ENCODE measurements at regions of chr12 and their contacts with region 1.

Region 1: GRCh38 chr12:53321074-53321814 is at the start of gene AAAS:
- DNase-seq: peak; percentile 95 to 97 (median 96)
- H3K4me3 ChIP-seq: peak within 1 kb of the TSS; percentile 87 to 94
- H3K4me3 Mint-ChIP-seq: peak within 1 kb of the TSS; percentile 94 to 100 (median 97)
- H3K27ac ChIP-seq: peak within 1 kb of the TSS; percentile 74
- H3K27ac Mint-ChIP-seq: peak within 1 kb of the TSS; percentile 90 to 100 (median 97)
- H3K4me1 ChIP-seq: peaks cover 44% of the 10 kb centered on the region
- H3K4me1 Mint-ChIP-seq: peaks cover 24 to 52% (median 38%) of the 10 kb centered on the region in 4 donors
- H3K27me3 ChIP-seq: no peaks in the 10 kb centered on the region
- H3K27me3 Mint-ChIP-seq: peaks cover 0 to 2% of the 10 kb centered on the region in 2 donors
- total RNA-seq, gene AAAS: 63.6 to 66.5 TPM

Region 2: DNA sequence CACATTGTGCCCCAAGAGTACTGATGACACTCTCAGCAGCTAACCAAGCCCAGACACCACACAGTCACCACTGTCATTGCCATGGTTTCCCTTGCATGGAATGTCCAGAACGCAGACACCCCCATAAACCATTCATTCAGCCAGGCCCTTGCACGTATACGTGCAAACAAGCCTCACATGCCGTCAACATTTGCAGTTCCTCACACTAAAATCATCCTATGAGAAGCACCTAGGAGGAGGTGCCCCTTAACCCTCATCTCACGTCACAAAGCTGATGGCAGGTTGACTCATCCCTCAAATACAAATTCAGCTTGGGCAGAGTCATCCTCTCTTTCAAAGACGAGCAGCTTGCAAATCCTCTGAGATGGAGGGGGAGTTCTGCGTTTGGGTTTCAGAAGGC is 600.8 kb before region 1 on chr12:
- CTCF ChIA-PET with region 1: no interaction called
- POLR2A ChIA-PET with region 1: no interaction called
- intact Hi-C with region 1: no loop called
- DNase-seq: no peak
- H3K4me3 ChIP-seq: no peak overlapping the region
- H3K4me3 Mint-ChIP-seq: no peak overlapping the region
- H3K27ac ChIP-seq: no peak overlapping the region
- H3K27ac Mint-ChIP-seq: peak overlapping the region in 1 of 7 donors; percentile 20
- H3K4me1 ChIP-seq: no peaks in the 10 kb centered on the region
- H3K4me1 Mint-ChIP-seq: no peaks in the 10 kb centered on the region
- H3K27me3 ChIP-seq: peaks cover 7% of the 10 kb centered on the region
- H3K27me3 Mint-ChIP-seq: peaks cover 11 to 16% of the 10 kb centered on the region in 2 donors

Region 3: DNA sequence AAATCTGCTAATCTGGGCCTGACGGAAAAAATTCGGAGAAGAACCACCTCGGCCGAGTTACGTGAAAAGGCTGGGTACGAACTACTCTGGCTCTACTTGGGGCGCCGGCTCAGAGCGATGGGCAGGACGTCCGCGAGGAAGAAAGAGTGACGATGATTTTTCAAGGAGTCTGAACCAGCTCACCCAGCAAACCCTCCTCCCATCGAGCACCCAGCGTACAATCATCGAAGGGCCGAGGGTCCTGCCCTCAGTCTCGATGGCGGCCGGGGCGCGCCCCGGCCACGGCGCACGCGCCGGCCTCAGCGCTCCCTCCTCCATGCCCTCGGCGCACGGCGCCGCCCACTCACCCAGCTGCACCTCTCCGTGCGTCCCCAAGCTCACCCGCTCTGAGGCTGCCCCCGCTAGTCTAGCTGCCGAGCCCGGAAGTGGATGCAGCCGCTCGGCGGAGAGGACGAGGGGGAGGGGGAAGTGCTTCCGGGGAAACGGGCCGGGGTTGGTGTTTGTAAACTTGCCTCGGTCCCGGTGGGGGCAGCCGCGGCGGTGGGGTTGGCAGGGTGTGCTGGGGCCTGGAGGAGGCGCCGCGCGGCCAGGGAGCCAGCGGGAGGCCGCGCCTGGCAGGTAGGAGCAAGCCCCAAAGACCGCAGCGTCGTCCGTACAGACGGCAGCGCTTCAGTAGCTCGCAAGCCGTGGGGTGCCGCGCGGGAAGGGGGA is 140.9 kb before region 1 on chr12 and contains the starts of genes CSAD and ZNF740:
- CTCF ChIA-PET with region 1: interaction called, 7 read pairs
- POLR2A ChIA-PET with region 1: interaction called, 15 read pairs
- intact Hi-C with region 1: loop called (anchors 1 kb)
- DNase-seq: peak; percentile 96 to 99 (median 97)
- H3K4me3 ChIP-seq: peak within 1 kb of the TSS; percentile 56 to 74
- H3K4me3 Mint-ChIP-seq: peak within 1 kb of the TSS; percentile 90 to 96 (median 91)
- H3K27ac ChIP-seq: peak within 1 kb of the TSS; percentile 89
- H3K27ac Mint-ChIP-seq: peak within 1 kb of the TSS; percentile 88 to 98 (median 97)
- H3K4me1 ChIP-seq: peaks cover 50% of the 10 kb centered on the region
- H3K4me1 Mint-ChIP-seq: peaks cover 36 to 62% (median 49%) of the 10 kb centered on the region in 4 donors
- H3K27me3 ChIP-seq: no peaks in the 10 kb centered on the region
- H3K27me3 Mint-ChIP-seq: no peaks in the 10 kb centered on the region
- total RNA-seq, gene CSAD: 62.5 to 64.2 TPM
- total RNA-seq, gene ZNF740: 109 to 113 TPM

Region 4: GRCh38 chr12:53251477-53252348 is 69.5 kb before region 1 on chr12:
- CTCF ChIA-PET with region 1: interaction called, 11 read pairs
- POLR2A ChIA-PET with region 1: interaction called, 5 read pairs
- intact Hi-C with region 1: no loop called
- DNase-seq: peak; percentile 67 to 78 (median 71)
- H3K4me3 ChIP-seq: peak overlapping the region; percentile 73 to 92
- H3K4me3 Mint-ChIP-seq: peak overlapping the region; percentile 96 to 100 (median 98)
- H3K27ac ChIP-seq: peak overlapping the region; percentile 83
- H3K27ac Mint-ChIP-seq: peak overlapping the region; percentile 96 to 99 (median 98)
- H3K4me1 ChIP-seq: peaks cover 46% of the 10 kb centered on the region
- H3K4me1 Mint-ChIP-seq: peaks cover 23 to 52% (median 41%) of the 10 kb centered on the region in 4 donors
- H3K27me3 ChIP-seq: no peaks in the 10 kb centered on the region
- H3K27me3 Mint-ChIP-seq: no peaks in the 10 kb centered on the region

Region 5: DNA sequence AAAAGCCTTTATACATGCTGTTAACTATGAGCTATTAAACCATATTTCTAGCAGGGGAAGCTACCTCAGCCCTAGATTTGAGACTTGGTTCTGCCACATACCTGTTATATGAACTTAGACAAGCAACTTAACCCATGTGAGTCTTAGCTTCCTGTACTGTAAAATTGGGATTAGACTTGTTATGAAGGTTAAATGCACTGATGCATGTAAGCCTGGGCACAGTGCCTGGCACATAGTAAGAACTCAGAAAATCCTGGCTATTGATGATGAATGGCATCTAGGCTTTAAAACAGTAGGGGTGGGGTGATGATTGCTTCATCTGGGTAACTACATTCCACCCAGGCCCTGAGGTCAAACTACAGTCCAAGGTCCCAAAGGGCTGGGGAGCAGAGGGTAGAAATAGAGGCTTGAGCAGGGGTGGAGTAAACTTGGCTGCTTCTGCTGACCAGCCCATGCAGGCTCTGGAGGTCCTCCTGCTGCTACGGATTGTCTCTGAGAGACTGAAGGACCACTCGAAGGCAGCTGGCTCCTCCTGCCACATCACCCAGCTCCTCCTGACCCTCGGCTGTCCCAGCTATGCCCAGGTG is 41.9 kb before region 1 on chr12:
- CTCF ChIA-PET with region 1: no interaction called
- POLR2A ChIA-PET with region 1: no interaction called
- intact Hi-C with region 1: no loop called
- DNase-seq: no peak
- H3K4me3 ChIP-seq: no peak overlapping the region
- H3K4me3 Mint-ChIP-seq: no peak overlapping the region
- H3K27ac ChIP-seq: no peak overlapping the region
- H3K27ac Mint-ChIP-seq: peak overlapping the region in 2 of 7 donors; percentile 13 to 68
- H3K4me1 ChIP-seq: no peaks in the 10 kb centered on the region
- H3K4me1 Mint-ChIP-seq: no peaks in the 10 kb centered on the region
- H3K27me3 ChIP-seq: no peaks in the 10 kb centered on the region
- H3K27me3 Mint-ChIP-seq: no peaks in the 10 kb centered on the region

Region 6: GRCh38 chr12:53308276-53308675 is 13.0 kb before region 1 on chr12:
- CTCF ChIA-PET with region 1: interaction called, 18 read pairs
- POLR2A ChIA-PET with region 1: interaction called, 6 read pairs
- intact Hi-C with region 1: no loop called
- DNase-seq: no peak
- H3K4me3 ChIP-seq: no peak overlapping the region
- H3K4me3 Mint-ChIP-seq: peak overlapping the region in 1 of 8 donors; percentile 5
- H3K27ac ChIP-seq: no peak overlapping the region
- H3K27ac Mint-ChIP-seq: peak overlapping the region in 3 of 7 donors; percentile 2 to 22 (median 17)
- H3K4me1 ChIP-seq: peaks cover 4% of the 10 kb centered on the region
- H3K4me1 Mint-ChIP-seq: peaks cover 0 to 2% (median under 1%) of the 10 kb centered on the region in 4 donors
- H3K27me3 ChIP-seq: no peaks in the 10 kb centered on the region
- H3K27me3 Mint-ChIP-seq: no peaks in the 10 kb centered on the region

Region 7: GRCh38 chr12:53379389-53380103 is 58.3 kb after region 1 on chr12:
- CTCF ChIA-PET with region 1: interaction called, 81 read pairs
- POLR2A ChIA-PET with region 1: interaction called, 59 read pairs
- intact Hi-C with region 1: loop called (anchors 1 kb)
- DNase-seq: peak; percentile 99 to 100 (median 100)
- H3K4me3 ChIP-seq: peak overlapping the region; percentile 57 to 86
- H3K4me3 Mint-ChIP-seq: no peak overlapping the region
- H3K27ac ChIP-seq: peak overlapping the region; percentile 70
- H3K27ac Mint-ChIP-seq: no peak overlapping the region
- H3K4me1 ChIP-seq: peaks cover 46% of the 10 kb centered on the region
- H3K4me1 Mint-ChIP-seq: peaks cover 28 to 37% (median 34%) of the 10 kb centered on the region in 4 donors
- H3K27me3 ChIP-seq: no peaks in the 10 kb centered on the region
- H3K27me3 Mint-ChIP-seq: no peaks in the 10 kb centered on the region

Region 8: DNA sequence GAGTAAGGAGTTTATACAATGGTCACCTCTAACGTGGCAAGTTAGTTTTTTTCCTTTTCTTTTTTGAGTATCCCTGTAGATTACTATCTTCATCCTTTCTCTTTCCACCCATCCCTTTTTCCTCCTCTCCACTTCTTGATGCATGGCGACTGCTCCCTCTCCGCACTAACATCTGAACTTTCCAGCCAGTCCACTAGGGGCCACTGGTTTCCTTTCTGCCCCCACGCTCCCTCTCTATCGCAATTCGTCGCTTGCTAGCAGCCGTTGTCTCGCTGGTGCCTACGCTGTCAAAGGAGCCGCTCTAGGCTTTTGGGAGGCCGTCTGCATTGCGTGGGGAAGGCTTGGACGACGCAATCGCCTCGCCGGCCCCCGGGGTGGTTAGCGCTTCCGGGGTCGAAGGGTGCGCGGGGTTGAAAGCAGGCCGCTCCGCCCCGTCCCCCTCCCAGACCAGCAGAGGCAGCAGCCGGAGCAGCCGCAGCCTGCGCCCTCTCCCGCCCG is 130.5 kb after region 1 on chr12 and contains the start of gene PCBP2:
- CTCF ChIA-PET with region 1: interaction called, 3 read pairs
- POLR2A ChIA-PET with region 1: interaction called, 11 read pairs
- intact Hi-C with region 1: no loop called
- DNase-seq: peak; percentile 97 to 99 (median 98)
- H3K4me3 ChIP-seq: peak within 1 kb of the TSS; percentile 58 to 61
- H3K4me3 Mint-ChIP-seq: peak within 1 kb of the TSS; percentile 95 to 100 (median 98)
- H3K27ac ChIP-seq: peak within 1 kb of the TSS; percentile 95
- H3K27ac Mint-ChIP-seq: peak within 1 kb of the TSS; percentile 98 to 100 (median 99)
- H3K4me1 ChIP-seq: peaks cover 34% of the 10 kb centered on the region
- H3K4me1 Mint-ChIP-seq: peaks cover 20 to 49% (median 31%) of the 10 kb centered on the region in 4 donors
- H3K27me3 ChIP-seq: no peaks in the 10 kb centered on the region
- H3K27me3 Mint-ChIP-seq: no peaks in the 10 kb centered on the region
- total RNA-seq, gene PCBP2: 848 to 858 TPM

Measured in CD4-positive, alpha-beta memory T cell (primary cell).